Activated CD8-positive, alpha-beta T cell treated with anti-CD3 and anti-CD28 coated beads for 36 hours (primary cell): ENCODE measurements at regions of chr17 and their contacts with region 1.

Region 1: DNA sequence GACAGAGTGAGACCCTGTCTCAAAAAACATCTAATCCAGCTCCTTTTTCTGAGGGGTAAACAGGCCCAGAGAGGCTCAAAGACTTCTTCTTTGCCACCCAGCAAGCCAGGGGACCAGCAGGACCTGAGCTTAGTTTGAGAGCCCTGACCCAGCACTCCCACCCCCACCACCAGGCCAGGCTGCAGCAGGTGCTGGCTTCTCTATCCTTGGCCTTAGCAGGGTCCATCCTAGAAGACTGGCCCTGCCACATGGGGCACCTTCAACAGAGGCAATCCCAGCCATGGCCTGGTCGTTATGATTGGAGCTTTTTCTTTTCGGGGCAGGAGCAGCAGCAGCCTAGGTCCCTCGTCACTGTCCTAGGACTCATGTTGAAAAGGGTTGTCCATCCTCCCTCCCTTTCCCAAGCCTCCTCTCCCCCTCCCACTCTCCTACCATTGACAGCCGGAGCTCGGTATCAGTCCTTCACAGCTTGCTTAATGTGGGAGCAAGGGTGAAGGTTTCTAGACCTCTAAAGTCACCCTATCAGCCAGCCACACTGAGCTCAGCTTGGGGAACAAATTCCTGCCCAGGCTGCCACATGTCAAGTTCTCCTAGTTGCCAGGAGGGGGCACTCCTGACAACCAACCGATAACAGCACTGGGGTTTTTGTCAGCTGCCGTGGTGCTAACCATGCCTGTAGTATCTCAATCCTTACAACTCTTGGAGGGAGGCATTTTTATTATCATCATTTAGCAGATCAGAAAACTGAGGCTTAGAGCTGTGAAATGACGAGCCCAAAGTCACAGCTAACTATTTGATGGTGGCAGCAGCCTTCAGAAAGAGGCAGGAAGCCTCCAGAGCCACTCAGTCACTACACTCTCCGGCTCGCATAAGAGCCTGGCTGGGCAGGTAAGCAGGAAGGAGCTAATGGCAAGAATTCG is 11.2 kb downstream of the MRPL27 start:
- DNase-seq: peak; percentile 73
- ATAC-seq: peak; percentile 87
- H3K4me3 Mint-ChIP-seq: no peak overlapping the region
- H3K27ac Mint-ChIP-seq: peak overlapping the region; percentile 79
- H3K4me1 Mint-ChIP-seq: peaks cover 16% of the 10 kb centered on the region
- H3K27me3 Mint-ChIP-seq: no peaks in the 10 kb centered on the region
- CTCF ChIP-seq: peak; percentile 85

Region 2: GRCh38 chr17:50218771-50219315 is 143.0 kb before region 1 on chr17:
- CTCF ChIA-PET with region 1: no interaction called
- POLR2A ChIA-PET with region 1: no interaction called
- intact Hi-C with region 1: no loop called
- DNase-seq: no peak
- ATAC-seq: no peak
- H3K4me3 Mint-ChIP-seq: no peak overlapping the region
- H3K27ac Mint-ChIP-seq: no peak overlapping the region
- H3K4me1 Mint-ChIP-seq: peaks cover 4% of the 10 kb centered on the region
- H3K27me3 Mint-ChIP-seq: peaks cover 2% of the 10 kb centered on the region
- CTCF ChIP-seq: no peak

Region 3: DNA sequence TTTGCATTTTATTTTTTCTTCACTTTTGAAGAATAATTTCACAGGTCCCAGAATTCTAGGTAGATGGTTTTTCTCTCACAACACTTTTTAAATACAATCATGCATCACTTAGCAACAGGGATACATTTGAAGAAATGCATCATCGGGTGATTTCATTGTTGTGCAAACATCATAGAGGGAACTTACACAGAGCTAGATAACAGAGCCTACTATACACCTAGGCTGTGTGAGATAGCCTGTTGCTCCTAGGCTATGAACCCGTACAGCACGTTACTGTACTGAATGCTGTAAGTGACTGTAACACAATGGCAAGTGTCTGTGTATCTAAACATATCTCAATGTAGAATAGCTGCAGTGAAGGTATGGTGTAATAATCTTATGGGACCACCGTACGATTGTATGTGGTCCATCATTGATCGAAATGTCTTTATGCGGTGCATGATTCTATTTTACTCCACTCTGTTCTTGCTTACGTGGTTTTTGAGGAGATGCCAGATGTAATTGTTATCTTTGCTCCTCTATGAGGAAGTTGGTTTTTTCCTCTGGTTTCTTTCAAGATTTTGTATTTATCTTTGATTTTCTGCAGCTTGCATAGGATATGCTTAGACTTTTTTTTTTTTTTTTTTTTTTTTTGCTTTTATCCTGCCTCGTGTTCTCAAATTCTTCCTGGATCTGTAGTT is 123.1 kb before region 1 on chr17:
- CTCF ChIA-PET with region 1: no interaction called
- POLR2A ChIA-PET with region 1: no interaction called
- intact Hi-C with region 1: no loop called
- DNase-seq: no peak
- ATAC-seq: no peak
- H3K4me3 Mint-ChIP-seq: no peak overlapping the region
- H3K27ac Mint-ChIP-seq: no peak overlapping the region
- H3K4me1 Mint-ChIP-seq: no peaks in the 10 kb centered on the region
- H3K27me3 Mint-ChIP-seq: peaks cover 36% of the 10 kb centered on the region
- CTCF ChIP-seq: no peak

Region 4: GRCh38 chr17:50345432-50346312 is 16.1 kb before region 1 on chr17 and contains the start of gene XYLT2:
- CTCF ChIA-PET with region 1: interaction called, 69 read pairs
- POLR2A ChIA-PET with region 1: interaction called, 69 read pairs
- intact Hi-C with region 1: no loop called
- DNase-seq: peak; percentile 91
- ATAC-seq: peak; percentile 93
- H3K4me3 Mint-ChIP-seq: peak within 1 kb of the TSS; percentile 91
- H3K27ac Mint-ChIP-seq: peak within 1 kb of the TSS; percentile 93
- H3K4me1 Mint-ChIP-seq: peaks cover 33% of the 10 kb centered on the region
- H3K27me3 Mint-ChIP-seq: no peaks in the 10 kb centered on the region
- CTCF ChIP-seq: no peak
- total RNA-seq, gene XYLT2: 24.4 to 25.3 TPM

Region 5: DNA sequence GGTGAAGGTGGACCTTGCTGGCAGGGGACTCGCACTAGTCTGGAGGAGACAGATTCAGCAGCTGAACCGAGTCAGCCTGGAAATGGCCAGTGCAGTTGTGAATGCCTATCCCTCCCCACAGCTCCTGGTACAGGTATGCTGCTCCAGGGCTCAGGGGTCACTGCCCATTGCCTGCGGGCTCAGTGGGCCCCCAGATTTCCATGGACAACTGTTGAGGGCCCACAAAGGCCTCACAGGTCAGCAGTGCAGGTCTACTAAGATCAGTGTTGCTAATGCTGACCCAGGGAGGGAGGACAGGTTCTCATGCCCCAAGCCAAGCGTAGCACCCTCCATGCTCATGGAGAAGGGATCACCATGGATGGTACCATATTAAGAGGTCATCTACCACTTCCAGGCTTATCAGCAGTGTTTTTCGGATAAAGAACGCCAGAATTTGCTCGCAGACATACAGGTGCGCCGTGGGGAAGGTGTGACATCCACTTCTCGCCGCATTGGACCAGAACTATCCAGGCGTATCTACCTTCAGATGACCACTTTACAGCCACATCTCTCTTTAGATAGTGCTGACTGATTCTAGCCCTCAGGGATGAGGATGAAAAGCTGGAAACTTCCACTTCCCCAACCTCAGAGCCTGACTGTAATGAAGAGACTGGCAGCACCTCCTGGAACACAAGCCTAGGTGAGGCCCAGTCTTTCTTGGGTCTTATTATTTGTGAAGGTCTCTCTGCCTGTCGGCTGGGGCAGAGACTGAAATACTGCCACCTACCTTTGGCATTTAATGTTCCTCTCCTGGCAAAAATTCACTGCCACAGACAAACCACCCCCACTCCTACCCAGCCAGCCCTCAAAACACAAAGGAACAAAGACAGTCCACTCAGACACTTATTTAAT is 18.8 kb after region 1 on chr17:
- CTCF ChIA-PET with region 1: interaction called, 46 read pairs
- POLR2A ChIA-PET with region 1: interaction called, 50 read pairs
- intact Hi-C with region 1: no loop called
- DNase-seq: no peak
- ATAC-seq: no peak
- H3K4me3 Mint-ChIP-seq: no peak overlapping the region
- H3K27ac Mint-ChIP-seq: no peak overlapping the region
- H3K4me1 Mint-ChIP-seq: no peaks in the 10 kb centered on the region
- H3K27me3 Mint-ChIP-seq: no peaks in the 10 kb centered on the region
- CTCF ChIP-seq: no peak

Region 6: GRCh38 chr17:50478391-50479381 is 116.9 kb after region 1 on chr17 and contains the start of gene RSAD1:
- CTCF ChIA-PET with region 1: interaction called, 26 read pairs
- POLR2A ChIA-PET with region 1: no interaction called
- intact Hi-C with region 1: no loop called
- DNase-seq: peak; percentile 90
- ATAC-seq: peak; percentile 94
- H3K4me3 Mint-ChIP-seq: peak within 1 kb of the TSS; percentile 89
- H3K27ac Mint-ChIP-seq: peak within 1 kb of the TSS; percentile 93
- H3K4me1 Mint-ChIP-seq: peaks cover 22% of the 10 kb centered on the region
- H3K27me3 Mint-ChIP-seq: peaks cover 3% of the 10 kb centered on the region
- CTCF ChIP-seq: peak; percentile 86
- total RNA-seq, gene RSAD1: 39.2 to 40.7 TPM